AG04450 (cell line): ENCODE measurements at regions of chr6 and their contacts with region 1.

Region 1: DNA sequence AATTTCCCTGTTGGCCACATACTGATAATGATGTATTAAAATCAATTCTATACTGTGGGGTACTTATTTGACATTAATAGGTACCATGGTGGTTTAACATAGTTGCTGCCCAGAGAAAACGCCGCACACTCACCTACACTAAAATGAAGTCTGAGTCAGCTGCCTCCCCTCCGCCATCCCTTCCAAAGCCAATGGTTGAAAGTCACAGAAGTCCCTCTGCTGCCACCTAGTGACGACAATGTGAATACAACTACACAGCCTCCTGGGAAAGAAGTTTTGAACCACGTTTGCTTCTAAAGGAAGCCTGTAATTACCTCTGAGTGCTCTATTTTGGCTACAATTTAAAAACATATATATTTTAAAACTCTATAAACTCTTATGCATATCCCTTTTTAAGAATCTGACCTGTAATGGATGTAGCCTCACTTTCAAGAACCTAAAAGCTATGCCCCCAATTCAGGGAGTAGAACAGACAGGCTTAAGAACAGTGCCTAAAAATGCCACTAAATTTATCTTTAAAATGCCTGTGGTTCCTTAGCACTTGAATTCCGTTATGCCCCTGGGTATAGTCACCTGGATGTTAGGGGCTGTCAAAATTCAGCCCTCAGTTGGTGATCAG is 20.6 kb upstream of the ECI2 start:
- DNase-seq: peak; percentile 64
- H3K4me3 ChIP-seq: no peak overlapping the region
- H3K27ac ChIP-seq: no peak overlapping the region
- H3K27me3 ChIP-seq: peaks cover 6% of the 10 kb centered on the region
- CTCF ChIP-seq: peak; percentile 88

Region 2: DNA sequence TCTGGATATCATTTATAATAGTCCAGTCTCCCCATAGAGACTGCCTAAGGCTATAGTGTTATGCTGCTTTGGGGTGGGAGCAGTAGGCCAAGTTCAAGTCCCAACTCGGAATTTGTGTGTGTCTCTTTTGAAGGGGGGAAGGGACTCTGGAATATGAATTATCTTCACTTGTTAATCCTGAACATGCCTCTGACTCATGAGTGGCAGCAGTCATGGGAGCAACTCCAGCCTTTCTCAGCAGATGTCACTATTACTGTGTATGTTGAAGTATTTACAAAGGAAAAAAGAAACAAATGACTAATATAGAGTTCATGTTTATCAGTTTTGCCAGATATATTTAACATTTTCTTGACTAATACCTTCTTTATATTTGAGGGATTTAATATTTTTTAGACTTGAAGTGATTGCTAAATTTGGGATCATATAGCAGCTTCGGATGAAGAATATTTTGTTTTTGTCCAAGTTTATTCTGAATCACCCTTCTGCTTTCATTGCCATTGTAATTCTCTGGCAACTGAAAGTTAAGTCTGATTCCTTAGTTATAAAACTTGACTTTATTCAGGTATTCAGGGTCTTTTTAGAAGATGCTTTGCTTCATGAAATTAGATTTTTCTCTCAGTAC is 100.4 kb before region 1 on chr6:
- CTCF ChIA-PET with region 1: interaction called, 23 read pairs
- POLR2A ChIA-PET with region 1: no interaction called
- DNase-seq: peak; percentile 39
- H3K4me3 ChIP-seq: no peak overlapping the region
- H3K27ac ChIP-seq: peak overlapping the region; percentile 40
- H3K27me3 ChIP-seq: no peaks in the 10 kb centered on the region
- CTCF ChIP-seq: peak; percentile 44

Region 3: DNA sequence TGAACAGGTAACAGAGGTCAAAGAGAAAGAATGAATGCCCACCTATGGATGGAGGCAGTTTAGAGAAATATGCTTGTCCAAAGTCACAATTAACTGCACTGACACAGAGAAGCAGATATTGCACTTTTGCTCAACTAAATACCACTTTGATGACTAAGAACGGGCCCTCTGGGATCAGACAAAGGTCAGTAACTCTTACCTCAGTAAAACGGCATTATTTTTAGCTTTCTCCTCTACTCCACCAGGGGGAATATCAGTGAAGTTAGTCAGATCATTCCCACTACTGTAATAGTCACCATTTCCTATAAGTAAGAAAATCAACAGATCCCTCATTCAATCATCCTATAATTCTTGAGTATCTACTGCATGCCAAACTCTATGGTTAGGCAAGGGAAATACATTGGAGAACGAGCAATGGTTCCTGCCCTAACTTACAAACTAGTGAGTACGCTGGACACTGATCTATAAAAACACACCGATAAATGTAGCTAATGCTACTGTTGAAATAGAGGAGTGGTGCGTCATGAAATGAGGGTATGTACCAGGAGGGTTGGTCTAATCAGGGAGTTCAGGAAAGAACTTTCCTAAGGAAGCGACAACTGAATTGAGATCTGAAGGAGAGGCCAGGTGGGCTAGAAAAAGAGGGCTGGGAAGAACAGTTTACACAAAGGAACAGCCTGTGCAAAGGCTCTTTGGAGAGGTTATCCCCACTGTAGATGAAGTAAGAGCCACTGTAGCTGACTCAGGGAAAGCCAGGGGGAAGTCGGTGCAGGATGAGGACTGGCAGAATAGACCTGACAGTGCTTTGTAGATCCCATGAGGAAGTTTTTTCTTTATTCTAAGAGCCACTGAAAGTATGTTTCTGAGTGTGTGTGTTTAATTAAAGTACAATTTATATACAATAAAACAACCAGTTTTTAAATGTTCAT is 29.8 kb before region 1 on chr6:
- CTCF ChIA-PET with region 1: interaction called, 17 read pairs
- POLR2A ChIA-PET with region 1: no interaction called
- DNase-seq: peak; percentile 62
- H3K4me3 ChIP-seq: no peak overlapping the region
- H3K27ac ChIP-seq: peak overlapping the region; percentile 11
- H3K27me3 ChIP-seq: no peaks in the 10 kb centered on the region
- CTCF ChIP-seq: peak; percentile 58

Region 4: GRCh38 chr6:4135665-4136353 is 20.1 kb before region 1 on chr6:
- CTCF ChIA-PET with region 1: interaction called, 14 read pairs
- POLR2A ChIA-PET with region 1: no interaction called
- DNase-seq: peak; percentile 89
- H3K4me3 ChIP-seq: peak overlapping the region; percentile 74
- H3K27ac ChIP-seq: peak overlapping the region; percentile 54
- H3K27me3 ChIP-seq: peaks cover 4% of the 10 kb centered on the region
- CTCF ChIP-seq: no peak

Region 5: DNA sequence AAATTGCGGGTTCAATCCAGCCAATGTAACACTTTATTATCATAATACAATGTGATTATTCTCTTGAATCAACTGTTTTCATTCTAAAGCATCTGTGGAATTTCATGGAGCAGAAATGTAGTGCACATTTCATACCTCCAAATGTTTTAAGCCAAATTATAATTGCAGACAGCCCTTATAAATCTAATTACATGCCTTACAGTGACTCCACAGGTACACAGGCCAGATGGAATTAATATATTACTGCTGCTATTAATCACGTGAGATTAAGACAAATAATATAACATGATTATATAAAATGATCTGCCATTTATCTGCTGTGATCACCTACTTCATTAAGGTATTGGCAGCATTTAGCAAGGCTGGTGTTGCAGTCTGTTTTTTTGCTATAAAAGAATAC is 10.9 kb before region 1 on chr6:
- CTCF ChIA-PET with region 1: interaction called, 10 read pairs
- POLR2A ChIA-PET with region 1: no interaction called
- DNase-seq: no peak
- H3K4me3 ChIP-seq: no peak overlapping the region
- H3K27ac ChIP-seq: no peak overlapping the region
- H3K27me3 ChIP-seq: no peaks in the 10 kb centered on the region
- CTCF ChIP-seq: no peak

Region 6: DNA sequence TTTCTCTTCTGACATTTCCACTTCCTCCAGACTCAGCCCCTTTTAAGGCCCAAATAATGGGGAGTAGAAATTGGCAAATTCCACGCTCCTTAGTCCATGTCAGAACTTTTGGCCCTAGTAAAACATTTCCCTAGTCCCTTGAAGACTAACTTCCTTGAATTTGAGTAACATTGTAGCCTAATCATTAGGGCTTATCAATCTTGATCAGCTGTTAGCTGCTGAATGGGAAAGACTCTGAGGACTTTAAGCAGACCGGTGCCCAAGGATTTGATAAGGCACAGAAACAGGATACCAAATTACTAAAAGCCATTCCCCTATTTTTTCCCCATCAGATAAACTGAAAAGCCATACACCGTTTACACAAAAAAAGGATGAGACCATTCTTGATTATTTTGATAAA is 16.4 kb after region 1 on chr6:
- CTCF ChIA-PET with region 1: interaction called, 11 read pairs
- POLR2A ChIA-PET with region 1: interaction called, 3 read pairs
- DNase-seq: no peak
- H3K4me3 ChIP-seq: no peak overlapping the region
- H3K27ac ChIP-seq: no peak overlapping the region
- H3K27me3 ChIP-seq: peaks cover 4% of the 10 kb centered on the region
- CTCF ChIP-seq: no peak

Region 7: DNA sequence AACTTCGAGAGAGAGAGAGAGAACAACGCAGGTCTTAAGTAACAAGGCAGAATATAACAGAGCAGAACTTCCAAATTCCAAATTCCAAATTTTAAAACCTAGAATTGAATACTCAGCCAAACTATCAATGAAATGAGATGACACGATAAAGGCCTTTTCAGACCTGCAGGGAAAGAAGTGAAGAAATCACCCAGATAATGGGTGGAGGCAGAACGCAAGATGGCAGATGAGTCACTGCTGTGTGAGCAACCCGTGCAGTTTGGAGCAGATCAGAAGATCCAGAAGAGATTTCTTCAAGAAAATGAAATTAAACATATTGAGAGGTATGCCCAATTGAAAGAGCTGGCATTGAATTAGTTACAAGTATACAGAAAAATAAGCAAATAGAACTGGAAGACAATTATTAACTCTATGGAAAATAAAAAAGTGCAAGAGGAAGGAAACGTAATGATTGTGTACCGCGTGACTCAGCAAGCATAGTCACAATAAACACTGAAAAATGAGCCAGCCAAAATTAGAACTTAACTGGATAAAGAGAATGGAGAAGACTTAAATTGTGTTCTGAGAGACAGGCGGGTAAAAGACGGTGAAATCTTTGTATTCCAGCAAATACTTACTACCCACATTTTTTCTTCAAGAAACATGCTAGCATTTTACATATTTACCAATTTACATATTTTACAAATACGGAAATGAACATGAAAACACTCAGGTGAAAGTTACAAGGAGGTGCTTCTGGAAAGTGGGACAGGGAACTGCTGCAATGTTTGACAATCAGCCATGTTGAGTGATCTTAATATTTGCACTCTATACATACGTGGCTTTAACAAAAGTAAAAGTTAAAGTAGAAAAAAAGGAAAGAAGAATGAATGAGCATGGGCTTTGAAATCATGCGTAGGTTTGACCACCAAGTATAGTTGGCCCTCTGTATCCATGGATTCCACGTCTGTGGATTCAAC is 532.3 kb after region 1 on chr6:
- CTCF ChIA-PET with region 1: no interaction called
- POLR2A ChIA-PET with region 1: no interaction called
- DNase-seq: peak; percentile 42
- H3K4me3 ChIP-seq: peak overlapping the region; percentile 33
- H3K27ac ChIP-seq: peak overlapping the region; percentile 32
- H3K27me3 ChIP-seq: peaks cover 3% of the 10 kb centered on the region
- CTCF ChIP-seq: no peak